B cell (primary cell): ENCODE measurements at regions of chr11 and their contacts with region 1.

Region 1: GRCh38 chr11:128733440-128734102 is 39.7 kb downstream of the FLI1 start:
- DNase-seq: peak; percentile 34
- ATAC-seq: peak; percentile 22
- H3K4me3 ChIP-seq: peak overlapping the region in 4 of 5 experiments; percentile 3 to 41 (median 14)
- H3K4me3 Mint-ChIP-seq: peak overlapping the region; percentile 82
- H3K27ac ChIP-seq: peak overlapping the region; percentile 66 to 80
- H3K27ac Mint-ChIP-seq: peak overlapping the region; percentile 96
- H3K4me1 ChIP-seq: peaks cover 99% of the 10 kb centered on the region in 2 donors
- H3K4me1 Mint-ChIP-seq: peaks cover 94% of the 10 kb centered on the region
- H3K27me3 ChIP-seq: no peaks in the 10 kb centered on the region
- H3K27me3 Mint-ChIP-seq: no peaks in the 10 kb centered on the region
- CTCF ChIP-seq: no peak

Region 2: GRCh38 chr11:128610721-128611617 is 122.6 kb before region 1 on chr11:
- CTCF ChIA-PET with region 1: interaction called, 3 read pairs
- POLR2A ChIA-PET with region 1: no interaction called
- intact Hi-C with region 1: loop called (anchors 1 kb)
- DNase-seq: peak; percentile 95
- ATAC-seq: peak; percentile 89
- H3K4me3 ChIP-seq: peak overlapping the region in 3 of 5 experiments; percentile 20 to 61 (median 29)
- H3K4me3 Mint-ChIP-seq: peak overlapping the region; percentile 58
- H3K27ac ChIP-seq: peak overlapping the region; percentile 93 to 95
- H3K27ac Mint-ChIP-seq: peak overlapping the region; percentile 93
- H3K4me1 ChIP-seq: peaks cover 85 to 87% of the 10 kb centered on the region in 2 donors
- H3K4me1 Mint-ChIP-seq: peaks cover 89% of the 10 kb centered on the region
- H3K27me3 ChIP-seq: no peaks in the 10 kb centered on the region
- H3K27me3 Mint-ChIP-seq: no peaks in the 10 kb centered on the region
- CTCF ChIP-seq: no peak

Region 3: DNA sequence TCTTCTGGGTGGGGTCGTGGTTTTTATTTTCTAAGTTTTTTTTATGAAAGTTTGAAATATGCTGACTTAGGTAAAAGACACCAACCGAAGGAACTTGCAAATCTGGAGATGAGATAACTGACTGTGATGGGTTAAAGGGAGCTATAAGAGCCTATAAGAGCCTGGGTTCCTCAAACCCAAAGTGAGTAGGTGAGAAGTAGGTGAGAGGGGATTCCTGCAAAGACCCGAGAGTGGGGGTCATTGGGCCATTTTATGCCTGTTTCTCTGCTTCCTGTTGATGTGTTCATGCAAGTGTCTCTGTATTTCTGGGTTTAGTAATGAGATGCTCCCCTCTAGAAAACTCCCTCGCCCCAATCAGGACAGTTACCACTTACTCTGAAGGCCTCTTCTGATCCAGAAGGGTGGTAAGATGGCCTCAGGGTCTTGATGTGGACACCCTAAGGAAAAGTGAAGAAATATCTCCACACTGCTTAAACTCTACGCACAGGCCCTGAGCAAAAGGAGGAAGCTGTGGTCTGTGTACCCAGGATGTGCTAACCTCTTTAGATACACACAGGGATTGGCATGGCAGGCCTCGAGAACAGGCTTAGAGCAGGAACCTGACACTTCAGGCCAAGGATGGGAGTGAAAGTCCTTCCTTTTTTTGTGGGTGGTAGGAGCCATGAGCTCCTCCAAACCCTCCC is 37.9 kb before region 1 on chr11:
- CTCF ChIA-PET with region 1: interaction called, 7 read pairs
- POLR2A ChIA-PET with region 1: interaction called, 10 read pairs
- intact Hi-C with region 1: loop called (anchors 1 kb)
- DNase-seq: peak; percentile 81
- ATAC-seq: peak; percentile 53
- H3K4me3 ChIP-seq: peak overlapping the region; percentile 62 to 100 (median 94)
- H3K4me3 Mint-ChIP-seq: peak overlapping the region; percentile 94
- H3K27ac ChIP-seq: peak overlapping the region; percentile 61 to 92
- H3K27ac Mint-ChIP-seq: peak overlapping the region; percentile 95
- H3K4me1 ChIP-seq: peaks cover 55 to 62% of the 10 kb centered on the region in 2 donors
- H3K4me1 Mint-ChIP-seq: peaks cover 62% of the 10 kb centered on the region
- H3K27me3 ChIP-seq: peaks cover 0 to 12% (median 4%) of the 10 kb centered on the region in 4 experiments
- H3K27me3 Mint-ChIP-seq: no peaks in the 10 kb centered on the region
- CTCF ChIP-seq: no peak

Region 4: DNA sequence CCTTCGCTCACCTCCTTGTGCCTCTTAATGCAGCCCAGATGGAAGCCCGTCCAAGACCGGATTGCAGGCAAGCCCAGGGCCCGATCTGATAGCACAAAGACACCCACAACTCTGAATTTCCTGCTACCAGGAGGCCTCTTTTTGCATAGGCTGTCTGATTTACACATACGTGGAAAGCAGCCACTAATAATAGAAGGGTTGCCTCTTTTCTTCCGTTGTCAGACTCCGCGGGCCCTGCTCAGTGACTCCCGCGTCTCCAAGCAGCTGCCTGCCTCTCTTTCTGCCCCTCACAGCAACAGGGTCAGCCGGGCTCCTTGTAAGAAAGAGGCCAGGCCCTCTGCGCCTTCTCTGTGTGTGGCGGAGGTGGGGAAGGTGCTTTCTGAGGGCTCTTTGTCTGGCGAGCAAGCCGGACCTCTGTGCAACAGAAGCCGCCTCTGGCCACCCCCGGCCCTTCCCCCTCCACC is 13.0 kb before region 1 on chr11:
- CTCF ChIA-PET with region 1: interaction called, 21 read pairs
- POLR2A ChIA-PET with region 1: interaction called, 13 read pairs
- intact Hi-C with region 1: loop called (anchors 2 kb)
- DNase-seq: peak; percentile 52
- ATAC-seq: peak; percentile 48
- H3K4me3 ChIP-seq: peak overlapping the region in 4 of 5 experiments; percentile 16 to 63 (median 42)
- H3K4me3 Mint-ChIP-seq: peak overlapping the region; percentile 88
- H3K27ac ChIP-seq: peak overlapping the region; percentile 56 to 88
- H3K27ac Mint-ChIP-seq: peak overlapping the region; percentile 98
- H3K4me1 ChIP-seq: peaks cover 100% of the 10 kb centered on the region in 2 donors
- H3K4me1 Mint-ChIP-seq: peaks cover 98% of the 10 kb centered on the region
- H3K27me3 ChIP-seq: no peaks in the 10 kb centered on the region
- H3K27me3 Mint-ChIP-seq: no peaks in the 10 kb centered on the region
- CTCF ChIP-seq: no peak

Region 5: GRCh38 chr11:128745311-128746136 is 12.0 kb after region 1 on chr11:
- CTCF ChIA-PET with region 1: interaction called, 15 read pairs
- POLR2A ChIA-PET with region 1: no interaction called
- intact Hi-C with region 1: no loop called
- DNase-seq: peak; percentile 13
- ATAC-seq: no peak
- H3K4me3 ChIP-seq: no peak overlapping the region
- H3K4me3 Mint-ChIP-seq: no peak overlapping the region
- H3K27ac ChIP-seq: peak overlapping the region in 1 of 2 donors; percentile 56
- H3K27ac Mint-ChIP-seq: peak overlapping the region; percentile 83
- H3K4me1 ChIP-seq: peaks cover 38 to 57% of the 10 kb centered on the region in 2 donors
- H3K4me1 Mint-ChIP-seq: peaks cover 79% of the 10 kb centered on the region
- H3K27me3 ChIP-seq: no peaks in the 10 kb centered on the region
- H3K27me3 Mint-ChIP-seq: no peaks in the 10 kb centered on the region
- CTCF ChIP-seq: no peak

Region 6: DNA sequence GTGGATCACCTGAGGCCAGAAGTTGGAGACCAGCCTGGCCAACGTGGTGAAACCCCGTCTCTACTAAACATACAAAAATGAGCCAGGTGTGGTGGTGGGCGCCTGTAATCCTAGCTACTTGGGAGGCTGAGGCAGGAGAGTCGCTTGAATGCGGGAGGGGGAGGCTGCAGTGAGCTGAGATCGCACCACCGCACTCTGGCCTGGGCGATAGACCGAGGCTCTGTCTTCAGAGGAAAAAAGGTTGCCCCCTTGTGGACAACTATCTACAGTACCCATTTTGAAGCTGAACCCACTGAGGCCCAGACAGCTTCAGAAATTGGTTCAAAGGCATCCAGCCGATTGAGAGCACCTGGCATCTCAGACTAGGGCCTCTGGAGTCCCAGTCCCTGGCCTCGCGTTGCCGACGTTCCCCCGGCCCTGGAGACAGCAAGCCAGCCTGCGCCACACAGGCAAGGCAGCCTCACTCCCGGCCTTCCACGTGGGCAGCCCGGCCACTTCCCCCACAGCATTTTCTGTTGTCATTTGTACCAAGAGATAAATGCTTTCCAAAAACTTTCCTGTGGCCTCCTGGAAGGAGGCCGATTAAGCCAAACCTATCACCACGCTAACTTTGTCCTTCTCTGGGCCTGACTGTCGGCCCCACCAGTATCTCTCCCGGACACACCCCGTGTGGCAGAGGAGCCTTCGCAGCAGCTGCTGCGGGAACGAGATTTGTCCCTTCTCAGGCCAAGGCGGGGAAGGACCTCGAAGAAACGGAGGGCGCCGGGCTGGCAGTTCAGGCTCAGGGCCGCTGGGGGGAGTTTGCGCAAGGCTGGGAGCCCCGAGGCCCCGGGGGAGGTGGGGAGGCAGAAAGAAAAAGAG is 43.1 kb after region 1 on chr11:
- CTCF ChIA-PET with region 1: interaction called, 4 read pairs
- POLR2A ChIA-PET with region 1: no interaction called
- intact Hi-C with region 1: loop called (anchors 5 kb)
- DNase-seq: peak; percentile 58
- ATAC-seq: peak; percentile 35
- H3K4me3 ChIP-seq: no peak overlapping the region
- H3K4me3 Mint-ChIP-seq: no peak overlapping the region
- H3K27ac ChIP-seq: no peak overlapping the region
- H3K27ac Mint-ChIP-seq: peak overlapping the region; percentile 51
- H3K4me1 ChIP-seq: peaks cover 25 to 36% of the 10 kb centered on the region in 2 donors
- H3K4me1 Mint-ChIP-seq: peaks cover 42% of the 10 kb centered on the region
- H3K27me3 ChIP-seq: no peaks in the 10 kb centered on the region
- H3K27me3 Mint-ChIP-seq: no peaks in the 10 kb centered on the region
- CTCF ChIP-seq: peak; percentile 60

Region 7: GRCh38 chr11:129728575-129728974 is 995.0 kb after region 1 on chr11:
- CTCF ChIA-PET with region 1: no interaction called
- POLR2A ChIA-PET with region 1: no interaction called
- intact Hi-C with region 1: no loop called
- DNase-seq: no peak
- ATAC-seq: no peak
- H3K4me3 ChIP-seq: no peak overlapping the region
- H3K4me3 Mint-ChIP-seq: no peak overlapping the region
- H3K27ac ChIP-seq: no peak overlapping the region
- H3K27ac Mint-ChIP-seq: no peak overlapping the region
- H3K4me1 ChIP-seq: no peaks in the 10 kb centered on the region
- H3K4me1 Mint-ChIP-seq: no peaks in the 10 kb centered on the region
- H3K27me3 ChIP-seq: no peaks in the 10 kb centered on the region
- H3K27me3 Mint-ChIP-seq: peaks cover 11% of the 10 kb centered on the region
- CTCF ChIP-seq: no peak